ENCODE measurements at regions of chr4 and their contacts with region 1.

Region 1: GRCh38 chr4:41214136-41214824 is at the start of gene APBB2:
- DNase-seq: peak; percentile 27
- H3K4me3 Mint-ChIP-seq: peak within 1 kb of the TSS; percentile 80
- H3K27ac Mint-ChIP-seq: no peak within 1 kb of the TSS
- H3K4me1 Mint-ChIP-seq: peaks cover 27% of the 10 kb centered on the region
- H3K27me3 Mint-ChIP-seq: peaks cover 42% of the 10 kb centered on the region
- total RNA-seq, gene APBB2: 11.0 and 11.3 TPM in 2 replicates

Region 2: GRCh38 chr4:40976343-40976742 is 237.9 kb before region 1 on chr4:
- intact Hi-C with region 1: loop called (anchors 1 kb)
- DNase-seq: no peak
- H3K4me3 Mint-ChIP-seq: no peak overlapping the region
- H3K27ac Mint-ChIP-seq: no peak overlapping the region
- H3K4me1 Mint-ChIP-seq: no peaks in the 10 kb centered on the region
- H3K27me3 Mint-ChIP-seq: no peaks in the 10 kb centered on the region

Region 3: DNA sequence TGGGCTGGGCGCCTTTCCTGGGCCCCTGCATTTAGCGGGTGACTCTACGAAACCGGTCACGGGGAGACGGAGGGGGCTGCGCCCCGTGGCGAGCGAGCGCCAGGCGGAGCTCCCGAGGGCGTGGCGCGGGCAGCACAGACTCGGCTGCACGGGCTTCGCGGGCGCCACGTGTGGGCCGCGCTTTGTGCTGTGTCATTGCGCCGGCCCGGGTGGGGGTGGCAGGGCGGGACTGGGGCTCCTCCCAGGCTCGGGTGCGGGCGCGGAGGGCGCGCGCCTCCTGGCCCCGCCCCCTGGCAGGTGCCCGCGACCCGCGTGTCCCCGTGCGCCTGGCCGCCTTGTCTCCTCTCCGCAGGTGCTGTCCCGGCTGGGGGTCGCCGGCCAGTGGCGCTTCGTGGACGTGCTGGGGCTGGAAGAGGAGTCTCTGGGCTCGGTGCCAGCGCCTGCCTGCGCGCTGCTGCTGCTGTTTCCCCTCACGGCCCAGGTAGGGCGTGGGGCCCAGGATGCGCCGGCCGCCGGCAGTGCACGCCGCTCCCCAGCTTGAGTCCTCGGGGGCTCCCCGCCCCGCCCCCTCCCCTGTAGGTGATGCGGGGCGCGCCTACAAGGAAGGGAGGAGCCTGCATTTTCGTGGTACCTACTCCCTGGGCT is 43.1 kb after region 1 on chr4:
- intact Hi-C with region 1: loop called (anchors 2 kb)
- DNase-seq: no peak
- H3K4me3 Mint-ChIP-seq: peak overlapping the region; percentile 77
- H3K27ac Mint-ChIP-seq: no peak overlapping the region
- H3K4me1 Mint-ChIP-seq: peaks cover 5% of the 10 kb centered on the region
- H3K27me3 Mint-ChIP-seq: peaks cover 42% of the 10 kb centered on the region

Region 4: DNA sequence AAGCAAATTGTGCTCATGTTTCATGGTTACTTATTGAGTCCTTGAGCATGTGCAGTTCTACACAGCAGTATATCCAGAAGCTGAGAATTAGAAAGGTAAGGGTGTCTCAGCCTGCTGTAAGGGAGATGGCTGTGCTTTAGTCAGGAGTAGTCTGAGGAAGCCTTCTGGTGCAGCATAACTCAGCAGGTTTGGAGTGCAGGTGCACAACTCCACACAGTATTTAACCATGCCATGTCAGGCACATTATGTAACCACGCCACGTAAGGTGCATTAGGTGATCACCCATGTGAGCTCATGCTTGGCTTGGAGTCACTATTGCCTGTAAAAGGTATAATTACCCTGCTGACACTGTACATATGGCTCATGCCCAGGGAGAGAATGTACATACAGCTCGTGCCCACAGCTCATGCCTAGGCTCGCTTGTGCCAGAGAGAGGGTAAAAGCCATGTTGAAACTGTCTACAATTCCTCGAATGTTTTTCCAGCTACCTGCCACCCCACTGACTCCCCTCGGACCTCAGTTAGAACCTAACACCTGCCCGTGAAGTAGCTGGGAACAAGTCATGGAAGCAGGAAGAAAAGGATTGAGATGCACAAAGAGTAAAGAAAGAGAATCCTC is 80.3 kb after region 1 on chr4:
- intact Hi-C with region 1: no loop called
- DNase-seq: no peak
- H3K4me3 Mint-ChIP-seq: no peak overlapping the region
- H3K27ac Mint-ChIP-seq: no peak overlapping the region
- H3K4me1 Mint-ChIP-seq: no peaks in the 10 kb centered on the region
- H3K27me3 Mint-ChIP-seq: no peaks in the 10 kb centered on the region